ENCODE measurements at regions of chr9 and their contacts with region 1.

Region 1: GRCh38 chr9:69193685-69194032 is 19.6 kb downstream of the TJP2 start:
- DNase-seq: no peak
- ATAC-seq: no peak
- H3K4me3 Mint-ChIP-seq: no peak overlapping the region
- H3K27ac Mint-ChIP-seq: no peak overlapping the region
- H3K4me1 Mint-ChIP-seq: no peaks in the 10 kb centered on the region
- H3K27me3 Mint-ChIP-seq: no peaks in the 10 kb centered on the region
- CTCF ChIP-seq: no peak

Region 2: DNA sequence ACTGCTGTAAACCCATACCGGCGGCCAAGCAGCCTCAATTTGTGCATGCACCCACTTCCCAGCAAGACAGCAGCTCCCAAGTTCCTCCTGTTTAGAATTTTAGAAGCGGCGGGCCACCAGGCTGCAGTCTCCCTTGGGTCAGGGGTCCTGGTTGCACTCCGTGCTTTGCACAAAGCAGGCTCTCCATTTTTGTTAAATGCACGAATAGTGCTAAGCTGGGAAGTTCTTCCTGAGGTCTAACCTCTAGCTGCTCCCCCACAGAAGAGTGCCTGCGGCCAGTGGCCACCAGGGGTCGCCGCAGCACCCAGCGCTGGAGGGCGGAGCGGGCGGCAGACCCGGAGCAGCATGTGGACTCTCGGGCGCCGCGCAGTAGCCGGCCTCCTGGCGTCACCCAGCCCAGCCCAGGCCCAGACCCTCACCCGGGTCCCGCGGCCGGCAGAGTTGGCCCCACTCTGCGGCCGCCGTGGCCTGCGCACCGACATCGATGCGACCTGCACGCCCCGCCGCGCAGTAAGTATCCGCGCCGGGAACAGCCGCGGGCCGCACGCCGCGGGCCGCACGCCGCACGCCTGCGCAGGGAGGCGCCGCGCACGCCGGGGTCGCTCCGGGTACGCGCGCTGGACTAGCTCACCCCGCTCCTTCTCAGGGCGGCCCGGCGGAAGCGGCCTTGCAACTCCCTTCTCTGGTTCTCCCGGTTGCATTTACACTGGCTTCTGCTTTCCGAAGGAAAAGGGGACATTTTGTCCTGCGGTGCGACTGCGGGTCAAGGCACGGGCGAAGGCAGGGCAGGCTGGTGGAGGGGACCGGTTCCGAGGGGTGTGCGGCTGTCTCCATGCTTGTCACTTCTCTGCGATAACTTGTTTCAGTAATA is 158.0 kb before region 1 on chr9 and contains the start of gene FXN:
- CTCF ChIA-PET with region 1: interaction called, 14 read pairs
- POLR2A ChIA-PET with region 1: no interaction called
- intact Hi-C with region 1: loop called (anchors 5 kb)
- DNase-seq: peak; percentile 82
- ATAC-seq: peak; percentile 95
- H3K4me3 Mint-ChIP-seq: peak within 1 kb of the TSS; percentile 95
- H3K27ac Mint-ChIP-seq: peak within 1 kb of the TSS; percentile 93
- H3K4me1 Mint-ChIP-seq: peaks cover 22% of the 10 kb centered on the region
- H3K27me3 Mint-ChIP-seq: no peaks in the 10 kb centered on the region
- CTCF ChIP-seq: peak; percentile 98
- total RNA-seq, gene FXN: 21.0 to 21.8 TPM

Region 3: GRCh38 chr9:69054989-69055388 is 138.7 kb before region 1 on chr9:
- CTCF ChIA-PET with region 1: interaction called, 174 read pairs
- POLR2A ChIA-PET with region 1: no interaction called
- intact Hi-C with region 1: loop called (anchors 1 kb)
- DNase-seq: no peak
- ATAC-seq: no peak
- H3K4me3 Mint-ChIP-seq: no peak overlapping the region
- H3K27ac Mint-ChIP-seq: no peak overlapping the region
- H3K4me1 Mint-ChIP-seq: peaks cover 2% of the 10 kb centered on the region
- H3K27me3 Mint-ChIP-seq: no peaks in the 10 kb centered on the region
- CTCF ChIP-seq: no peak

Region 4: DNA sequence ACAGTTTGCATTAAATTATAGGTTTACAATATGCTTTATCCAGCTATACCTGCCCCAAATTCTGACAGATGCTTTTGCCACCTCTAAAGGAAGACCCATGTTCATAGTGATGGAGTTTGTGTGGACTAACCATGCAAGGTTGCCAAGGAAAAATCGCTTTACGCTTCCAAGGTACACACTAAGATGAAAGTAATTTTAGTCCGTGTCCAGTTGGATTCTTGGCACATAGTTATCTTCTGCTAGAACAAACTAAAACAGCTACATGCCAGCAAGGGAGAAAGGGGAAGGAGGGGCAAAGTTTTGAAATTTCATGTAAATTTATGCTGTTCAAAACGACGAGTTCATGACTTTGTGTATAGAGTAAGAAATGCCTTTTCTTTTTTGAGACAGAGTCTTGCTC is 117.1 kb before region 1 on chr9:
- CTCF ChIA-PET with region 1: interaction called, 11 read pairs
- POLR2A ChIA-PET with region 1: no interaction called
- intact Hi-C with region 1: no loop called
- DNase-seq: no peak
- ATAC-seq: no peak
- H3K4me3 Mint-ChIP-seq: no peak overlapping the region
- H3K27ac Mint-ChIP-seq: no peak overlapping the region
- H3K4me1 Mint-ChIP-seq: no peaks in the 10 kb centered on the region
- H3K27me3 Mint-ChIP-seq: no peaks in the 10 kb centered on the region
- CTCF ChIP-seq: no peak

Region 5: GRCh38 chr9:69157751-69158466 is 35.8 kb before region 1 on chr9:
- CTCF ChIA-PET with region 1: interaction called, 38 read pairs
- POLR2A ChIA-PET with region 1: no interaction called
- intact Hi-C with region 1: no loop called
- DNase-seq: peak; percentile 41
- ATAC-seq: no peak
- H3K4me3 Mint-ChIP-seq: no peak overlapping the region
- H3K27ac Mint-ChIP-seq: no peak overlapping the region
- H3K4me1 Mint-ChIP-seq: no peaks in the 10 kb centered on the region
- H3K27me3 Mint-ChIP-seq: no peaks in the 10 kb centered on the region
- CTCF ChIP-seq: no peak

Region 6: DNA sequence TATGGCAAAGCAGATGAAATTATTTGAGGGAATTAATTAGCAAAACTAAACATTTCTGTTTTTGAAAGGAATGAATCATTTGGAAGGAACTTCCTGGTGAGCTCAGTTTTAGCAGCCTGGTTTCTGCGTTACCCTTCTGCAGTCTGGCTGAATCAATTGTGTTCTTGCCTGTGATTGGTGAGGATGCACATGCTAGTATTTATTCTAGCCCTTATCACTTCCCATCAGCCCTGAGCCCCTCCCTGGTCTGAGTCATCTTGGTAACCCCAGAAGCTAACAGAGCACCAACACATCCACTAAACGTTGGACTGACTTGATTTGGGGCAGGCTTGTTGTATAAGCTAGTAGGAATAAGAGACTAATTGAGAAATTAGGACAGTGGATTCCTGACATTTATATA is 13.0 kb before region 1 on chr9:
- CTCF ChIA-PET with region 1: interaction called, 14 read pairs
- POLR2A ChIA-PET with region 1: no interaction called
- intact Hi-C with region 1: no loop called
- DNase-seq: peak; percentile 68
- ATAC-seq: peak; percentile 98
- H3K4me3 Mint-ChIP-seq: no peak overlapping the region
- H3K27ac Mint-ChIP-seq: no peak overlapping the region
- H3K4me1 Mint-ChIP-seq: peaks cover 25% of the 10 kb centered on the region
- H3K27me3 Mint-ChIP-seq: peaks cover 10% of the 10 kb centered on the region
- CTCF ChIP-seq: no peak

Region 7: GRCh38 chr9:69207503-69207902 is 13.8 kb after region 1 on chr9:
- CTCF ChIA-PET with region 1: interaction called, 11 read pairs
- POLR2A ChIA-PET with region 1: no interaction called
- intact Hi-C with region 1: no loop called
- DNase-seq: no peak
- ATAC-seq: no peak
- H3K4me3 Mint-ChIP-seq: no peak overlapping the region
- H3K27ac Mint-ChIP-seq: no peak overlapping the region
- H3K4me1 Mint-ChIP-seq: no peaks in the 10 kb centered on the region
- H3K27me3 Mint-ChIP-seq: no peaks in the 10 kb centered on the region
- CTCF ChIP-seq: no peak

Region 8: GRCh38 chr9:69223605-69224004 is 29.9 kb after region 1 on chr9:
- CTCF ChIA-PET with region 1: no interaction called
- POLR2A ChIA-PET with region 1: no interaction called
- intact Hi-C with region 1: no loop called
- DNase-seq: peak; percentile 4
- ATAC-seq: no peak
- H3K4me3 Mint-ChIP-seq: no peak overlapping the region
- H3K27ac Mint-ChIP-seq: no peak overlapping the region
- H3K4me1 Mint-ChIP-seq: no peaks in the 10 kb centered on the region
- H3K27me3 Mint-ChIP-seq: no peaks in the 10 kb centered on the region
- CTCF ChIP-seq: peak; percentile 51

Region 9: GRCh38 chr9:69236188-69236587 is 42.5 kb after region 1 on chr9:
- CTCF ChIA-PET with region 1: no interaction called
- POLR2A ChIA-PET with region 1: no interaction called
- intact Hi-C with region 1: no loop called
- DNase-seq: no peak
- ATAC-seq: no peak
- H3K4me3 Mint-ChIP-seq: no peak overlapping the region
- H3K27ac Mint-ChIP-seq: no peak overlapping the region
- H3K4me1 Mint-ChIP-seq: no peaks in the 10 kb centered on the region
- H3K27me3 Mint-ChIP-seq: no peaks in the 10 kb centered on the region
- CTCF ChIP-seq: no peak

Measured in activated CD8-positive, alpha-beta T cell treated with anti-CD3 and anti-CD28 coated beads for 36 hours (primary cell).